ENCODE measurements at regions of chrX and their contacts with region 1.

Region 1: GRCh38 chrX:31213941-31214340 is 142.1 kb upstream of the FTHL17 start:
- DNase-seq: no peak
- H3K4me3 ChIP-seq: no peak overlapping the region
- H3K27me3 ChIP-seq: no peaks in the 10 kb centered on the region
- CTCF ChIP-seq: peak; percentile 63

Region 2: DNA sequence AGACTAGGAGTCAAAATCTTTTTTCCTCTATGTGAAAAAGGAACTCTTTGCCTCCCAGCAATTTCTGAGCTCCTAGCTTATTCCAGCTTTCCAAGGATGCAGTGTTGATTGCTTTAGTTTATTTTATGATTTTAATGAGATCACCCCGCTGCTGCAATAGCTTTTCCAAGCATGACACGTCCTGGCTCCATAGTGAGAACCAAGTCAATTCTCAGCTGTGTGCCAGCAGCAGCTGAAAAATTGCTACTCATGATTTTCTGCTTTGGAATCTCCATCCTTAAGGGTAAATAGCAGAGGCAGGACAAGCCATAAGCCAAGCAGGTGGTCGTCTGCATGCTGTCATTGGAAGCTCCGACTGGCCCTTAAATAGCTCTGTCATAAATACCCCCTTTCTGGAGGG is 206.6 kb before region 1 on chrX:
- CTCF ChIA-PET with region 1: no interaction called
- POLR2A ChIA-PET with region 1: no interaction called
- DNase-seq: no peak
- H3K4me3 ChIP-seq: no peak overlapping the region
- H3K27me3 ChIP-seq: no peaks in the 10 kb centered on the region
- CTCF ChIP-seq: no peak

Region 3: DNA sequence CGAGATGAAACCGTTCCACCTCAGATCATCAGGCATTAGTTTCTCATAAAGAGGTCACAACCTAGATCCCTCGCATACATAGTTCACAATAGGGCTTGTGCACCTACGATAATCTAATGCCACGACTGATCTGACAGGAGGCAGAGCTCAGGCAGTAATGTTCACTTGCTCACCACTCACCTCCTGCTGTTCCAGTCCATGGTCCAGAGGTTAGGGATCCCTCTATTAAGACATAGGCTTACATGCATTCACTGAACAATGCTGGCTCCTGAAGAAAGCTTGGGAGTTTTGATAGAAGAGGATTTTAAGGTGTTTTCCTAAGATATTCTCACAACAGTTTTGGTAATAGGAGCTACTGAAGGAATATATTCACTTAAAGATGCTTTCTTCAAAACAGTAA is 94.0 kb after region 1 on chrX:
- CTCF ChIA-PET with region 1: no interaction called
- POLR2A ChIA-PET with region 1: no interaction called
- DNase-seq: no peak
- H3K4me3 ChIP-seq: no peak overlapping the region
- H3K27me3 ChIP-seq: no peaks in the 10 kb centered on the region
- CTCF ChIP-seq: no peak

Region 4: DNA sequence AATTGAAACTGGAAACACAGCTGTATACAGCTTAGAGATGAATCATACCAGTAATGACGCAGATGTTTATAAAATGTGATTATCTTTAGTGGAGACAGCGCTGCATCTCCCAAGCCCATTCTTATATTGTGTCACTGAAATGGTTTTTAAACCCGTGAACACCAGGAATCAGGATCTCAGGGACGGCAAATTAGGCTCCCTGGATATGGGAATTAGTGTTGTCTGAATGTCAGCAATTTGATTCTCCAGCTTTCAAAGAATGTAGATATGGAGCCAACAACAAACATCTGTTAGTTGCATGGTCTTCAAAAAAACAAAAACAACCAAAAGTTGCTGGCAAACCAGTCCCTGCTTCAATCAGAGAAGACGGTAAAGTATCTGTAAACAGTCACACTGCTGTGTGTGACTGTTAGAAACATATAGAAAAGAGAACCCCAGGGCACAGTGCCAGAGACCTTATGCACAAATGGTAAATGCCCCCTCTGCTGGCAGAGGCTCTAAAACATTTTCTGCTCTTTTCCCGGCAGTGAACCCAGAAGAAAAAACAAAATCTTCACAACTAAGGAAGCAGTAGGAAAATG is 209.8 kb after region 1 on chrX:
- CTCF ChIA-PET with region 1: interaction called, 10 read pairs
- POLR2A ChIA-PET with region 1: no interaction called
- DNase-seq: peak; percentile 31
- H3K4me3 ChIP-seq: no peak overlapping the region
- H3K27me3 ChIP-seq: no peaks in the 10 kb centered on the region
- CTCF ChIP-seq: peak; percentile 50

Region 5: GRCh38 chrX:31658360-31658759 is 444.4 kb after region 1 on chrX:
- CTCF ChIA-PET with region 1: interaction called, 13 read pairs
- POLR2A ChIA-PET with region 1: no interaction called
- DNase-seq: no peak
- H3K4me3 ChIP-seq: no peak overlapping the region
- H3K27me3 ChIP-seq: no peaks in the 10 kb centered on the region
- CTCF ChIP-seq: peak; percentile 31; the same call in 1 of the 2 replicates

Measured in BJ (cell line).